Naive thymus-derived CD4-positive, alpha-beta T cell (primary cell): ENCODE measurements at regions of chr12 and their contacts with region 1.

Region 1: GRCh38 chr12:48851883-48852733 is at the start of gene DDX23:
- DNase-seq: peak; percentile 73 to 93 (median 89)
- ATAC-seq: peak; percentile 98
- H3K4me3 ChIP-seq: peak within 1 kb of the TSS; percentile 96
- H3K4me3 Mint-ChIP-seq: peak within 1 kb of the TSS; percentile 89 to 99 (median 98)
- H3K27ac ChIP-seq: peak within 1 kb of the TSS; percentile 93
- H3K27ac Mint-ChIP-seq: peak within 1 kb of the TSS; percentile 89 to 100 (median 98)
- H3K4me1 ChIP-seq: peaks cover 18 to 24% of the 10 kb centered on the region in 2 donors
- H3K4me1 Mint-ChIP-seq: peaks cover 30 to 49% (median 43%) of the 10 kb centered on the region in 7 donors
- H3K27me3 ChIP-seq: no peaks in the 10 kb centered on the region
- H3K27me3 Mint-ChIP-seq: no peaks in the 10 kb centered on the region
- total RNA-seq, gene DDX23: 84.0 to 160 (median 127) TPM

Region 2: DNA sequence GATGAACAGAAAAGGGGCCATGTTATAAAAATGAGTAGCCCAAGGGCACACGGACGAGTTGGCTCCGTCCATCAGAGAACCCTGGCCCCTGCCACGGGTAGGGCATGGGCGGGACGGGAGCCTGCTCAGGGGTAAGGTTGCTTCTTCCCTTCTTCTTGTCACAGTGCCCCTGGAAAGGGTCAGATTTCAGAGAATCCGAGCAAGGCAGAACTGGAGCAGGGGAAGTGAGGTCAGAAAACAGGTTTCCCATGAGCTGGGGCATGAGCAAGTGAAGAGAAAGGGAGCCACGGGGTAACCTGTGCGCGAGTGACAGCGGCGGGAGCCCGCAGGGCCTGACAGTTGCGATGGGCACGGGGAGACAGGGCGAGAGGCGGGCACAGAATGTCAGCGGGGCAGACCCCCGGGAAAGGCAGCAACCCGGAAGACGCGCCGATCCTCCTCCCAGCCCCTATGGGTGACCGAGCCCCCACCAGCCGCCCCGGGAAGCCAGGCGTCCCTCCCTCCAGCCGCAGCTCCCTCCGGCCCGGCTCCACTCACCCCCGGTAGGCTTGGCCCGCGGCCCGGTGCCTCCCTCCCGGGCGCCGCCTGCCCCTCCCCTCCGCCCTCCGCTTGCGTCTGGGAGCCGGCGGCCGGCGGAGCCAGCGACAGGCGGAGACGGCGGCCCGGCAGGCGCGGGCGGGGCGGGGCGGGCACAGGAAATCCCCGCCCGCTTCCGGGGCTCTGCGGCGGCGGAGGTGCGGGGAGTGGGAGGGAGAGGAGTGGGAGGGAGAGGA is 501.7 kb before region 1 on chr12 and contains the start of gene ZNF641:
- CTCF ChIA-PET with region 1: no interaction called
- POLR2A ChIA-PET with region 1: no interaction called
- intact Hi-C with region 1: no loop called
- DNase-seq: peak; percentile 74 to 85 (median 84)
- ATAC-seq: peak; percentile 95
- H3K4me3 ChIP-seq: peak within 1 kb of the TSS; percentile 77
- H3K4me3 Mint-ChIP-seq: peak within 1 kb of the TSS; percentile 91 to 99 (median 96)
- H3K27ac ChIP-seq: peak within 1 kb of the TSS; percentile 92
- H3K27ac Mint-ChIP-seq: peak within 1 kb of the TSS; percentile 89 to 99 (median 96)
- H3K4me1 ChIP-seq: peaks cover 14 to 25% of the 10 kb centered on the region in 2 donors
- H3K4me1 Mint-ChIP-seq: peaks cover 25 to 61% (median 49%) of the 10 kb centered on the region in 7 donors
- H3K27me3 ChIP-seq: peaks cover 0 to 5% of the 10 kb centered on the region in 2 donors
- H3K27me3 Mint-ChIP-seq: peaks cover 0 to 12% (median 0%) of the 10 kb centered on the region in 5 donors
- total RNA-seq, gene ZNF641: 22.1 to 50.3 (median 30.1) TPM

Region 3: DNA sequence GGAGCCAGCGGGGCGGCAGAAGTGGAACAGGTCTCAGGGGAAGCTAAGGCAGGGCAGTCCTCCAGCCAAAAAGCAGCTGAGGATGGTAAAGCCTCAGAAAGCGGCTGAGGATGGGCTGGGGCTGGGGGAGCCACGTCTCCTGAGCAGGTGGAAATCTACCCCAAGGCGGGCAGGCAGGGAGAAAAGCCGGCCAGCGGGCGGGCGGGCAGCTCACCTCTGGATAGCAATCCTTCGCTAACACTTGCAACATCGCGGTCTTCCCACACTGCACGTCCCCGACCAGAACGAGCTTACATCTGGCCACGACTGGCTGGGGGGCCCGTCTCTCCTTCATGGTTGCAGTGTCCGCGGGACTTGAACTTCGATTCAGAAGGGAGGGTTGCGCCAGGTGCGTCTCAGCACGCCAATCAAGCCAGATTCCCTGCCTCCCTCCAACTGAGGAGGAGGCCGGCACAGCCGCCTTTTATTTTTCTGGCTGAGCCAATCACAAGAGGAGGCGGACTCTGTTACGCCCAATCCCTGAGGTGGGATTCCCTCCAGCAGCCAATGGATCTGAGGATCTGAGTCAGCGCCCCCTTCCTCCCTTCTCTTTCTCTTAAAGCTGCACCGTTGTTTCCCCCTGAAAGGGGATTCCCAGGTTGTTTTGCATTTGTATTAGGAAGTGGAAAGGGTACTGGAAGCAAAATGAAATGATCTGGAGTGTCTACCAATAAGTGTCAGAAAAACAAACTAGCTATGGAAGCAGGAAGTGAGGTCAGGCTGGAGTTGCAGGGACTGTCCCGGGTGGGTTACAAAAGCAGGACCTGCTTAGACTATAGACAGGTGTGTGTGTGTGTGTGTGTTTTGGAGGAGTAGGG is 13.6 kb after region 1 on chr12 and contains the start of gene RND1:
- CTCF ChIA-PET with region 1: interaction called, 36 read pairs
- POLR2A ChIA-PET with region 1: interaction called, 56 read pairs
- intact Hi-C with region 1: loop called (anchors 1 kb)
- DNase-seq: peak; percentile 50 to 92 (median 82)
- ATAC-seq: peak; percentile 96
- H3K4me3 ChIP-seq: peak within 1 kb of the TSS; percentile 69
- H3K4me3 Mint-ChIP-seq: peak within 1 kb of the TSS; percentile 87 to 95 (median 94)
- H3K27ac ChIP-seq: peak within 1 kb of the TSS; percentile 62
- H3K27ac Mint-ChIP-seq: peak within 1 kb of the TSS; percentile 66 to 96 (median 85)
- H3K4me1 ChIP-seq: peaks cover 10 to 11% of the 10 kb centered on the region in 2 donors
- H3K4me1 Mint-ChIP-seq: peaks cover 15 to 28% (median 25%) of the 10 kb centered on the region in 7 donors
- H3K27me3 ChIP-seq: no peaks in the 10 kb centered on the region
- H3K27me3 Mint-ChIP-seq: peaks cover 23 to 40% (median 28%) of the 10 kb centered on the region in 5 donors
- total RNA-seq, gene RND1: 1.1 to 13.5 (median 2.3) TPM

Region 4: DNA sequence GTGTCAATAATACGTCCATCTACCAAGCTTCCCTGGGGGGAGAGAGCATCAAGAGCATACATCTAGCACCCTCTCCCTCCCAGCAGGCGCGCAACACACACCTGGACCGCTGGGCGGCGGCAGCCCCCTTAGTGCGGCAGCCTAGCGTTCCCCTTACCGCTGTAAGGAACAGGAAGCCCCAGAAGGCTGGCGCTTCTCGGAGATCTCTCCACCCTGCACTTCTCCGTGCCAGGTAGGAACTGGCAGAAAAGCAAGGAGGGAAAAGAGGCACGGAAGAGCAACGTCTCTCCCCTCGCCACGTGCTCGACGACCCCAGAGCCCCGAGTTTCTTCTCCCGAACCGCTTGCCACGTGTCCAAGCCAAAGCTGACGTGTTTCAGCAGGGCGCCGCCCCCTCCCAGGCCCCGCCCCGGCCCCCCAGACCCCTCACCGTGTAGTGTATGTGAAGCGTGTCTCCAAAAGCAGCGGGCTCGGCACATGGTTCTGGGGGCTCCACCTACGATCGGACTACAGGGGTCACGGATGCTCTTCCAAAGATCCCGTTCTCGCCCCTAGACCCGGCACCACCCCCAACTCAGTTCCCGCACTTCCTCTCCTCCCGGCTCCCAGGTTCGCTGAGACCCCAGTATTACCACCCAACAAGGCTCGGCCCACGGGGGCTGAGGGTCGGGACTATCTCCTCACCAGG is 72.7 kb after region 1 on chr12:
- CTCF ChIA-PET with region 1: interaction called, 8 read pairs
- POLR2A ChIA-PET with region 1: interaction called, 17 read pairs
- intact Hi-C with region 1: loop called in 1 of 2 experiments (anchors 1 kb)
- DNase-seq: peak; percentile 56 to 80 (median 77)
- ATAC-seq: peak; percentile 86
- H3K4me3 ChIP-seq: peak overlapping the region; percentile 72
- H3K4me3 Mint-ChIP-seq: peak overlapping the region; percentile 89 to 98 (median 93)
- H3K27ac ChIP-seq: peak overlapping the region; percentile 99
- H3K27ac Mint-ChIP-seq: peak overlapping the region; percentile 74 to 98 (median 95)
- H3K4me1 ChIP-seq: peaks cover 10 to 18% of the 10 kb centered on the region in 2 donors
- H3K4me1 Mint-ChIP-seq: peaks cover 18 to 52% (median 42%) of the 10 kb centered on the region in 7 donors
- H3K27me3 ChIP-seq: no peaks in the 10 kb centered on the region
- H3K27me3 Mint-ChIP-seq: no peaks in the 10 kb centered on the region

Region 5: DNA sequence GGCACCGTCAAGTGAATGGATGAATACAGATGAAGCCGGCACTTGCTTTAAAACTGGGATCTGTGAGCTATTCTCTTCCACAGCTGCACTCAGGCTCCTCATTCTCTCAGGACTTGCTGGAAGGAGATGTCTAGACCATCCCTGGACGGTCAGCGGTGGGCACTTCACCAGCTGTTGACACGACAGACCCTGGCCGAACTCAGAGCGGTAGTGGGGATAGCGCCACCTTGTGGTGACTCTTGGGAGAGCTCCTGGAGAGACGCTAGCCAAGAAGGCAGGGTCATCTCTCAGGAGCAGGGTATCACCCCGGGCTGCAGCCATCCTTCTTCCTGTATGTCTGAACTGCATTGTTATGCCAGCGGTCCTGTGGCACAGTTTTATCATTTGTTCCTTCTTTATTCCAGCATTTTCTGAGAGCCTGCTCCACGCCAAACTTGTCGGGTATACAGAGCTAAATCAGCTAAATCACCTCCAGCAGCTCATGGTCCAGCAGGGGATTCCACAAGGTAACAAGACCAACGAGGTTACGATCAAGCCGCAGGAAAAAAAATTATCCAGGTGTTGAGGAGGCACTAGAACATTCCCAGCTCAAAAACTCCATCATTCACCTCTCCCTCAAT is 136.0 kb after region 1 on chr12:
- CTCF ChIA-PET with region 1: interaction called, 12 read pairs
- POLR2A ChIA-PET with region 1: no interaction called
- intact Hi-C with region 1: no loop called
- DNase-seq: peak in 8 of 9 donors; percentile 45 to 82 (median 60)
- ATAC-seq: peak; percentile 90
- H3K4me3 ChIP-seq: no peak overlapping the region
- H3K4me3 Mint-ChIP-seq: no peak overlapping the region
- H3K27ac ChIP-seq: no peak overlapping the region
- H3K27ac Mint-ChIP-seq: no peak overlapping the region
- H3K4me1 ChIP-seq: no peaks in the 10 kb centered on the region
- H3K4me1 Mint-ChIP-seq: peaks cover 0 to 12% (median 8%) of the 10 kb centered on the region in 7 donors
- H3K27me3 ChIP-seq: no peaks in the 10 kb centered on the region
- H3K27me3 Mint-ChIP-seq: peaks cover 21 to 79% (median 31%) of the 10 kb centered on the region in 5 donors

Region 6: GRCh38 chr12:49110464-49111155 is 258.5 kb after region 1 on chr12 and contains the start of gene LMBR1L:
- CTCF ChIA-PET with region 1: no interaction called
- POLR2A ChIA-PET with region 1: no interaction called
- intact Hi-C with region 1: loop called in 1 of 2 experiments (anchors 5 kb)
- DNase-seq: peak; percentile 76 to 98 (median 96)
- ATAC-seq: peak; percentile 96
- H3K4me3 ChIP-seq: peak within 1 kb of the TSS; percentile 76
- H3K4me3 Mint-ChIP-seq: peak within 1 kb of the TSS; percentile 95 to 100 (median 98)
- H3K27ac ChIP-seq: peak within 1 kb of the TSS; percentile 95
- H3K27ac Mint-ChIP-seq: peak within 1 kb of the TSS; percentile 96 to 99 (median 99)
- H3K4me1 ChIP-seq: peaks cover 14 to 19% of the 10 kb centered on the region in 2 donors
- H3K4me1 Mint-ChIP-seq: peaks cover 14 to 48% (median 44%) of the 10 kb centered on the region in 7 donors
- H3K27me3 ChIP-seq: no peaks in the 10 kb centered on the region
- H3K27me3 Mint-ChIP-seq: no peaks in the 10 kb centered on the region
- total RNA-seq, gene LMBR1L: 67.4 to 328 (median 263) TPM

Region 7: GRCh38 chr12:50025187-50026059 is 1173.3 kb after region 1 on chr12 and contains the start of gene RACGAP1:
- CTCF ChIA-PET with region 1: no interaction called
- POLR2A ChIA-PET with region 1: no interaction called
- intact Hi-C with region 1: loop called in 1 of 2 experiments (anchors 2 kb)
- DNase-seq: peak; percentile 77 to 98 (median 97)
- ATAC-seq: peak; percentile 99
- H3K4me3 ChIP-seq: peak within 1 kb of the TSS; percentile 81
- H3K4me3 Mint-ChIP-seq: peak within 1 kb of the TSS; percentile 90 to 99 (median 96)
- H3K27ac ChIP-seq: peak within 1 kb of the TSS; percentile 73
- H3K27ac Mint-ChIP-seq: peak within 1 kb of the TSS; percentile 38 to 97 (median 90)
- H3K4me1 ChIP-seq: peaks cover 0 to 12% of the 10 kb centered on the region in 2 donors
- H3K4me1 Mint-ChIP-seq: peaks cover 10 to 43% (median 18%) of the 10 kb centered on the region in 7 donors
- H3K27me3 ChIP-seq: no peaks in the 10 kb centered on the region
- H3K27me3 Mint-ChIP-seq: peaks cover 0 to 3% (median 0%) of the 10 kb centered on the region in 5 donors
- total RNA-seq, gene RACGAP1: 4.2 to 111 (median 8.0) TPM